ENCODE measurements at regions of chr2 and their contacts with region 1.

Region 1: GRCh38 chr2:127174136-127174535 is 46.0 kb downstream of the CYP27C1 start:
- DNase-seq: no peak
- H3K4me3 ChIP-seq: no peak overlapping the region
- H3K27me3 ChIP-seq: no peaks in the 10 kb centered on the region
- CTCF ChIP-seq: peak; percentile 58

Region 2: DNA sequence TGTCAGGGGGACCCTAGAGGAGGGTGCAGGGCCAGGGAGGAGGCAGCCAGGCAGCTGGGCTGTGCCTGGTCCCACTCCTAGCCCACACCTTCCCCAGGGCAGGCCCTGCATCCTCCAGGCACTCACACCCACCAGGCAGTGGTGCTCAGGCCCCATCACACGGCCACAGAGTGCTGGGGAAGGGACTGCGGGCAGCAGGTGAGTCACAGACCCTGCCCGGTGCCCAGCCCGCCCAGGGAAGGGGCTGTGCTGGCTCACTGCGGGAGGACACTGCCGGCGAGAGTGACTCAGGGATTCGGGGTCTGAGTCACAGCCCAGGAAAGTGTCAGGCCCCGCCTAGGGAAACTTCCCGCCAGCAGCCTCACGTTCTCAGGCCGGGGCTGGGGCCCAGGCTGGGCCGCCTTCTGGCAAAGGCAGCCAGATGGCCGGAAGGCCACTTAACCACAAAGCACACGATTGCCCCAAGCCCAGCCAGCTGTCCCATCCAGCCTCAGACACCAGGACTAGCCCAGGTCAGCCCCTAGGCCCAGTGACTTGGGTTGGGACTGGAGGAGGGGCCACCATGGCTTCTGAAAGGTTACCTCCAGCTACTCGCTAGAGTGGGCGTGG is 109.4 kb before region 1 on chr2:
- CTCF ChIA-PET with region 1: interaction called, 19 read pairs
- POLR2A ChIA-PET with region 1: no interaction called
- DNase-seq: peak; percentile 92
- H3K4me3 ChIP-seq: no peak overlapping the region
- H3K27me3 ChIP-seq: no peaks in the 10 kb centered on the region
- CTCF ChIP-seq: peak; percentile 29

Region 3: DNA sequence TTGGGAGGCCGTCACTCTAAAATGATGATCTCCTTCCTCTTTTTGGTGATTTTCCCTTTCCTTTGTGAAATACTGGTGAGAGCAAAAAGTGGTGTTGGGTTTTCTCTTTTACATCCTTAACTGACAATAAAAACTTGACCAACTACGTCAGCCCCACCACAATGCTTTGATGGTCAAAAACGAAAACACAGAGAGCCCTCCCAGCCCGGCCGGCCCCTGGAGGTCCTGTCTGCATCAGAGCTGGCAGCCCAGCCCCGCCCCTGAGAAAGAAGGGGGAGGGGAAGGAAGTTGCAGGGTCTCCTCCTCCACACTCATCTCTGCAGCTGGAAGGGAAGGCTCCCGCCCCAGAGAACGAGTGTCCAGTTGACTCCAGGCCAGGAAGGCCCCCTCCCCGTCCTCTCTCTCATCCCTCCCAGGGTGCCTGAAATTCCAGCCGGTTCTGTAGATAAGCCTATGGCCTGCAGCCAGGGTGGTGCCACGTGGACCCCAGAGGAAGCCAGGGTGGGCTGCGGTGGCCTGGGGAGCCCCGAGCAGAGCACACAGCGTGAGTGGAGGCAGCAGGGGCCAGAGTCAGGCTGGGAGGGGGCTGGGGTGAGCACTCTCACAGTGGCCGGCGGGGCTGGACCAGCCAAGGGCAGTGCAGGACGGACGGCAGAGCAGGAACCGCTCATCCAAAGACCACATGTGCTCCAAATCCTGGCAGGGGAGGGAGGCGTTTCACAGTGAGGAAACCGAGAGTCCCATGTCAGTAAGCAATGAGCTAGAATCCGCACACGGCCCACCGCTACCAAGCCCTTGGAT is 86.9 kb before region 1 on chr2:
- CTCF ChIA-PET with region 1: no interaction called
- POLR2A ChIA-PET with region 1: no interaction called
- DNase-seq: no peak
- H3K4me3 ChIP-seq: no peak overlapping the region
- H3K27me3 ChIP-seq: no peaks in the 10 kb centered on the region
- CTCF ChIP-seq: no peak

Region 4: DNA sequence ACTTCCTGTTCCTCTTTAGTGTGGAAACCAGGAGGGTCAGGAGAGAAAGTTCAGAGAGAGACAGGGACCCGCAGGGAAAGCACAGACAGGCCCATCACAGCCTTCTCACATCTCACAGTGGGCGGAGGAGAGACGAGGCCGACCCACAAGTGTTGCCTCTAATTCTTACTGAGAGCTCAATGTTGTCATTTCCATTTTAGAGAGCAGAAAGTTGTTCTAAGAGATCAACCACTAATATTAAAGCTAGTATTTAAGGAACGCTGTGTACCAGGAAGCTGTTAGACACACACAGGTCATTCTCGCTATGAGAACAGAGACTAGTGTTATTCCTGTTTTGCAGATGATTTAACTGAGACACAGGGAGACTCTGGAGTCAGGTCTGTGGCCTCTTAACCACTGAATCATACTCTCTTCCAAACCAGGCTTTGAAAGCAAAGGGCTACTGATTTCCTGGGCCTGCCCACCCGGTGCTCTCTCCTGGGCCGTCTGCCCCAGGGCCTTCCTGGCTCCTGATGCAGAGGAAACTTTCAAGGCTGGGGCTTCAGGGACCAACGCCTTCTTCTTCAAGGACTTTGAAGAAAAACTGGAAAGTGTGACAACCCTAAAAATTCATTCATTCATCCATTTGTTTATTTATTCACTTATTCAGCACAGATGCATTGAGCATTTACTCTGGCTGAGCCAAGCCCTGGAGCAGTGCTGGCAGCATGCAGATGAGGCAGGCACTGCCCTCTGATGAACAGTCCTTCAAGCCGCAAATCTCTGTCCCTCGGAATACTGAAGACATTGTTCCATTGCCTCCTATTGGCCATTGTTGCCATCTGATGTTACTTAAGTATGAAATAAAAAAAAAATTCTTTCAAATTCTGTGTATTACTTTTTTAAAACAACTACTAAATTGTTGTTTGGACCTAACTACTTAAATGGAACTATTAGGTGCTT is 30.0 kb before region 1 on chr2:
- CTCF ChIA-PET with region 1: interaction called, 12 read pairs
- POLR2A ChIA-PET with region 1: interaction called, 3 read pairs
- DNase-seq: no peak
- H3K4me3 ChIP-seq: no peak overlapping the region
- H3K27me3 ChIP-seq: peaks cover 2% of the 10 kb centered on the region; the same call in 1 of the 2 replicates
- CTCF ChIP-seq: no peak

Region 5: GRCh38 chr2:127158614-127159290 is 15.4 kb before region 1 on chr2:
- CTCF ChIA-PET with region 1: interaction called, 12 read pairs
- POLR2A ChIA-PET with region 1: interaction called, 5 read pairs
- DNase-seq: no peak
- H3K4me3 ChIP-seq: no peak overlapping the region
- H3K27me3 ChIP-seq: 0 out of 2 replicates have a peak, but pooled peaks cover 3% of the 10 kb centered on the region
- CTCF ChIP-seq: no peak

Region 6: GRCh38 chr2:127208313-127208712 is 34.2 kb after region 1 on chr2:
- CTCF ChIA-PET with region 1: no interaction called
- POLR2A ChIA-PET with region 1: no interaction called
- DNase-seq: no peak
- H3K4me3 ChIP-seq: no peak overlapping the region
- H3K27me3 ChIP-seq: 0 out of 2 replicates have a peak, but pooled peaks cover 3% of the 10 kb centered on the region
- CTCF ChIP-seq: no peak

Region 7: DNA sequence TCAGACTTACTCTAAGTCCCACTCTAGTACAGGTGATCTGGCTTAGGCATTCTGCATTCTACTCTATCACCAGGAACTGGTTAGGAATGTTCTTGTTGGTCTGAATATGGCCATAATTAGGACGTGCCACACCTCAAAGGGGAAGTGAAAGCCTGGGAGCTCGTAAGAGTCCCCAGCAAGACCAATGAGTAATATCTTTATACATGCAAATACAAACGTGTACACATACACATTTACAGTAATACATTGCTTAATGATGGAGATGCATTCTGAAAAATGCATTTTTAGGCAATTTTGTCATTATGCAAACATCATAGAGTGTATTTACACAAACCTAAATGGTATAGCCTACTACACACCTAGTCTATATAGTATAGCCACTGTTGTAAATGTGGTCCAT is 139.3 kb after region 1 on chr2:
- CTCF ChIA-PET with region 1: no interaction called
- POLR2A ChIA-PET with region 1: no interaction called
- DNase-seq: no peak
- H3K4me3 ChIP-seq: no peak overlapping the region
- H3K27me3 ChIP-seq: no peaks in the 10 kb centered on the region
- CTCF ChIP-seq: no peak

Region 8: GRCh38 chr2:127783101-127783500 is 609.0 kb after region 1 on chr2:
- CTCF ChIA-PET with region 1: no interaction called
- POLR2A ChIA-PET with region 1: no interaction called
- DNase-seq: no peak
- H3K4me3 ChIP-seq: no peak overlapping the region
- H3K27me3 ChIP-seq: no peaks in the 10 kb centered on the region
- CTCF ChIP-seq: no peak